Activated naive CD4-positive, alpha-beta T cell treated with anti-CD3 and anti-CD28 coated beads, Interleukin-2, amount 10 ng/mL, durations not matched to agents 7 days and 5 days (primary cell): ENCODE measurements at regions of chr5 and their contacts with region 1.

Region 1: GRCh38 chr5:170633235-170634081 is 129.6 kb downstream of the KCNIP1 start:
- DNase-seq: no peak
- H3K4me3 Mint-ChIP-seq: no peak overlapping the region
- H3K27ac Mint-ChIP-seq: peak overlapping the region; percentile 20
- H3K4me1 Mint-ChIP-seq: peaks cover 10% of the 10 kb centered on the region
- H3K27me3 Mint-ChIP-seq: peaks cover 39% of the 10 kb centered on the region

Region 2: GRCh38 chr5:170427672-170428236 is 205.7 kb before region 1 on chr5:
- CTCF ChIA-PET with region 1: interaction called, 115 read pairs
- DNase-seq: no peak
- H3K4me3 Mint-ChIP-seq: no peak overlapping the region
- H3K27ac Mint-ChIP-seq: no peak overlapping the region
- H3K4me1 Mint-ChIP-seq: no peaks in the 10 kb centered on the region
- H3K27me3 Mint-ChIP-seq: peaks cover 58% of the 10 kb centered on the region

Region 3: DNA sequence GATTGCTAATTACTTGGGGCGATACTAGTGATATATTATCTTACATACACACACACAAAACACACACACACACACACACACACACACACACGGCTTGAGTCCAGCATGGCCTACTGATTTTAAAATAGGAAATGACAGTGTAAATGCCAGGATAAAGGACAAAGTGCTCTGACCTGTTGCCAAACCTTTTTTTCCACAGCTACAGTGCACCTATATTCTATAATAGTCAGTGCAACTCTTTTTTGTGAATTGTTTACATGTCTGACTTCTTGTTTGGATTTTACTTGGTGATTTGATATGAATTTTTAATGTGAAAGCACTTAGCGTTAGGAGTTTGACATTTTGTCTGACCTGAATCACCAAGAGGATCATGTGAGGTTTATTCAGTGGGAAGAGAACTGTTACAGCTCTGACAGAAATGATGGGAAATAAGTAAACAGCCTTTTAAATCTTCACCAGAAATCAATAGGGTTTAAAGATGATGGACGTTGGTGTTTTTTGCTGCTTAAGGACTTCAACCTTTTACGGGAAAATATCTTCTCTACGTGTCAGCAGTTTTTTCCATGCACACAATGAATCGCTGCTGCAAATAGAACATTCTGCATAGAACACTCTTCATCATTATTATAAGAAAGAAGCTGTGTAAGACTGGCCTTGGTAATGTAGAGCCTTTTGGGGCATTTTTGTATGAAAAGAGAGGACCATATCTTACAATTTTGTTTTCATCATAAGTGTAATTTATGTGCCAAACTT is 446.9 kb after region 1 on chr5:
- CTCF ChIA-PET with region 1: no interaction called
- DNase-seq: no peak
- H3K4me3 Mint-ChIP-seq: no peak overlapping the region
- H3K27ac Mint-ChIP-seq: no peak overlapping the region
- H3K4me1 Mint-ChIP-seq: no peaks in the 10 kb centered on the region
- H3K27me3 Mint-ChIP-seq: no peaks in the 10 kb centered on the region